Naive thymus-derived CD4-positive, alpha-beta T cell (primary cell): ENCODE measurements at regions of chr1 and their contacts with region 1.

Region 1: GRCh38 chr1:241847796-241848685 is at the start of gene EXO1:
- DNase-seq: peak; percentile 84 to 92 (median 89)
- ATAC-seq: peak; percentile 99
- H3K4me3 ChIP-seq: peak within 1 kb of the TSS; percentile 96
- H3K4me3 Mint-ChIP-seq: peak within 1 kb of the TSS; percentile 87 to 99 (median 96)
- H3K27ac ChIP-seq: peak within 1 kb of the TSS; percentile 96
- H3K27ac Mint-ChIP-seq: peak within 1 kb of the TSS; percentile 95 to 99 (median 99)
- H3K4me1 ChIP-seq: peaks cover 6 to 12% of the 10 kb centered on the region in 2 donors
- H3K4me1 Mint-ChIP-seq: peaks cover 7 to 42% (median 17%) of the 10 kb centered on the region in 7 donors
- H3K27me3 ChIP-seq: no peaks in the 10 kb centered on the region
- H3K27me3 Mint-ChIP-seq: peaks cover 0 to 8% (median 0%) of the 10 kb centered on the region in 5 donors
- total RNA-seq, gene EXO1: 0.11 to 29.8 (median 1.0) TPM

Region 2: GRCh38 chr1:241519308-241520079 is 328.5 kb before region 1 on chr1 and contains the start of gene FH:
- CTCF ChIA-PET with region 1: no interaction called
- POLR2A ChIA-PET with region 1: no interaction called
- intact Hi-C with region 1: loop called (anchors 1 kb)
- DNase-seq: peak; percentile 83 to 96 (median 94)
- ATAC-seq: peak; percentile 99
- H3K4me3 ChIP-seq: peak within 1 kb of the TSS; percentile 66
- H3K4me3 Mint-ChIP-seq: peak within 1 kb of the TSS in 8 of 10 donors; percentile 85 to 96 (median 92)
- H3K27ac ChIP-seq: peak within 1 kb of the TSS; percentile 82
- H3K27ac Mint-ChIP-seq: peak within 1 kb of the TSS; percentile 56 to 92 (median 82)
- H3K4me1 ChIP-seq: peaks cover 5 to 6% of the 10 kb centered on the region in 2 donors
- H3K4me1 Mint-ChIP-seq: peaks cover 2 to 46% (median 38%) of the 10 kb centered on the region in 7 donors
- H3K27me3 ChIP-seq: no peaks in the 10 kb centered on the region
- H3K27me3 Mint-ChIP-seq: peaks cover 15 to 28% (median 26%) of the 10 kb centered on the region in 5 donors
- total RNA-seq, gene FH: 17.3 to 57.9 (median 21.8) TPM

Region 3: DNA sequence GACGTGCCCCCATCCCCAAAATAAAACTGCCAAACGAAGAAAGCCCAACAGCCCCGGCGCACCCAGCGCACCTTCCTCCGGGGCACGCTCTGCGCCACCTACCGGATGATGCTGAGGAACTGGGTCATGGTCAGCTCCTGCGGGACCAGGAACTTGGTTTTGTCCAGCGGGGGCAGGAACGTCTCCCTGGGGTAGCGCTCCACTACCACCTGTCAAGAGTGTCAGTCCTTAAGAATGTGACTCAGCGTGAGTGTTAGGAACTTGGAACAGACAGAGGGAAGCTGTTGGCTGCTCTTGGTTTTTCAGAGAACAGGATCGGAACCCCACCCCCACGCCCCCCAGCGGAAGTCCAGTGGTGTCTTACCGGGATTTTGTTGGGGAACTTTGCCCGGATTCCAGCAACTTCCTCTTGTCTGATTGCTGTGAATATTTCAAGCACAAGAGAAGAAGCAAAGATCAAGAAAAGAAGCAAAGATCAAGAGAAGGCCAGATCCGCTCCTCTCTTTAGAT is 150.4 kb after region 1 on chr1:
- CTCF ChIA-PET with region 1: no interaction called
- POLR2A ChIA-PET with region 1: no interaction called
- intact Hi-C with region 1: loop called in 1 of 2 experiments (anchors 1 kb)
- DNase-seq: peak; percentile 10 to 53 (median 30)
- ATAC-seq: peak; percentile 69
- H3K4me3 ChIP-seq: peak overlapping the region; percentile 39
- H3K4me3 Mint-ChIP-seq: peak overlapping the region; percentile 16 to 68 (median 61)
- H3K27ac ChIP-seq: no peak overlapping the region
- H3K27ac Mint-ChIP-seq: no peak overlapping the region
- H3K4me1 ChIP-seq: no peaks in the 10 kb centered on the region
- H3K4me1 Mint-ChIP-seq: peaks cover 0 to 7% (median 5%) of the 10 kb centered on the region in 7 donors
- H3K27me3 ChIP-seq: peaks cover 0 to 3% of the 10 kb centered on the region in 2 donors
- H3K27me3 Mint-ChIP-seq: peaks cover 0 to 6% (median 4%) of the 10 kb centered on the region in 5 donors